ENCODE measurements at regions of chr15 and their contacts with region 1.

Region 1: GRCh38 chr15:22838292-22839042 is at the start of gene NIPA2:
- DNase-seq: peak; percentile 98 to 99 (median 98)
- H3K4me3 ChIP-seq: peak within 1 kb of the TSS; percentile 77 to 85
- H3K4me3 Mint-ChIP-seq: peak within 1 kb of the TSS; percentile 91 to 97 (median 94)
- H3K27ac ChIP-seq: peak within 1 kb of the TSS; percentile 96
- H3K27ac Mint-ChIP-seq: peak within 1 kb of the TSS; percentile 84 to 98 (median 94)
- H3K4me1 ChIP-seq: peaks cover 25% of the 10 kb centered on the region
- H3K4me1 Mint-ChIP-seq: peaks cover 18 to 46% (median 31%) of the 10 kb centered on the region in 4 donors
- H3K27me3 ChIP-seq: no peaks in the 10 kb centered on the region
- H3K27me3 Mint-ChIP-seq: no peaks in the 10 kb centered on the region
- total RNA-seq, gene NIPA2: 39.5 to 43.9 TPM

Region 2: GRCh38 chr15:22786868-22787698 is 51.4 kb before region 1 on chr15:
- CTCF ChIA-PET with region 1: interaction called, 6 read pairs
- POLR2A ChIA-PET with region 1: interaction called, 17 read pairs
- intact Hi-C with region 1: loop called (anchors 1 kb)
- DNase-seq: peak in 2 of 5 donors; percentile 16 to 34
- H3K4me3 ChIP-seq: peak overlapping the region; percentile 52 to 64
- H3K4me3 Mint-ChIP-seq: peak overlapping the region; percentile 84 to 89 (median 86)
- H3K27ac ChIP-seq: peak overlapping the region; percentile 54
- H3K27ac Mint-ChIP-seq: peak overlapping the region; percentile 75 to 90 (median 86)
- H3K4me1 ChIP-seq: peaks cover 9% of the 10 kb centered on the region
- H3K4me1 Mint-ChIP-seq: peaks cover 10 to 41% (median 25%) of the 10 kb centered on the region in 4 donors
- H3K27me3 ChIP-seq: no peaks in the 10 kb centered on the region
- H3K27me3 Mint-ChIP-seq: no peaks in the 10 kb centered on the region

Region 3: GRCh38 chr15:22795206-22796063 is 43.0 kb before region 1 on chr15:
- CTCF ChIA-PET with region 1: interaction called, 6 read pairs
- POLR2A ChIA-PET with region 1: no interaction called
- intact Hi-C with region 1: loop called (anchors 2 kb)
- DNase-seq: no peak
- H3K4me3 ChIP-seq: no peak overlapping the region
- H3K4me3 Mint-ChIP-seq: peak overlapping the region in 5 of 8 donors; percentile 8 to 48 (median 20)
- H3K27ac ChIP-seq: no peak overlapping the region
- H3K27ac Mint-ChIP-seq: peak overlapping the region in 6 of 7 donors; percentile 22 to 95 (median 68)
- H3K4me1 ChIP-seq: peaks cover 16% of the 10 kb centered on the region
- H3K4me1 Mint-ChIP-seq: peaks cover 28 to 63% (median 44%) of the 10 kb centered on the region in 4 donors
- H3K27me3 ChIP-seq: no peaks in the 10 kb centered on the region
- H3K27me3 Mint-ChIP-seq: no peaks in the 10 kb centered on the region

Region 4: GRCh38 chr15:23039151-23039916 is 200.9 kb after region 1 on chr15 and contains the start of gene TUBGCP5:
- CTCF ChIA-PET with region 1: interaction called, 3 read pairs
- POLR2A ChIA-PET with region 1: interaction called, 16 read pairs
- intact Hi-C with region 1: loop called (anchors 1 kb)
- DNase-seq: peak; percentile 96 to 98 (median 97)
- H3K4me3 ChIP-seq: peak within 1 kb of the TSS; percentile 65 to 83
- H3K4me3 Mint-ChIP-seq: peak within 1 kb of the TSS; percentile 90 to 100 (median 96)
- H3K27ac ChIP-seq: peak within 1 kb of the TSS; percentile 23
- H3K27ac Mint-ChIP-seq: peak within 1 kb of the TSS; percentile 88 to 99 (median 91)
- H3K4me1 ChIP-seq: peaks cover 19% of the 10 kb centered on the region
- H3K4me1 Mint-ChIP-seq: peaks cover 11 to 35% (median 21%) of the 10 kb centered on the region in 4 donors
- H3K27me3 ChIP-seq: no peaks in the 10 kb centered on the region
- H3K27me3 Mint-ChIP-seq: peaks cover 0 to 1% of the 10 kb centered on the region in 2 donors
- total RNA-seq, gene TUBGCP5: 26.0 to 28.3 TPM

Measured in CD4-positive, alpha-beta memory T cell (primary cell).